ENCODE measurements at regions of chr12 and their contacts with region 1.

Region 1: DNA sequence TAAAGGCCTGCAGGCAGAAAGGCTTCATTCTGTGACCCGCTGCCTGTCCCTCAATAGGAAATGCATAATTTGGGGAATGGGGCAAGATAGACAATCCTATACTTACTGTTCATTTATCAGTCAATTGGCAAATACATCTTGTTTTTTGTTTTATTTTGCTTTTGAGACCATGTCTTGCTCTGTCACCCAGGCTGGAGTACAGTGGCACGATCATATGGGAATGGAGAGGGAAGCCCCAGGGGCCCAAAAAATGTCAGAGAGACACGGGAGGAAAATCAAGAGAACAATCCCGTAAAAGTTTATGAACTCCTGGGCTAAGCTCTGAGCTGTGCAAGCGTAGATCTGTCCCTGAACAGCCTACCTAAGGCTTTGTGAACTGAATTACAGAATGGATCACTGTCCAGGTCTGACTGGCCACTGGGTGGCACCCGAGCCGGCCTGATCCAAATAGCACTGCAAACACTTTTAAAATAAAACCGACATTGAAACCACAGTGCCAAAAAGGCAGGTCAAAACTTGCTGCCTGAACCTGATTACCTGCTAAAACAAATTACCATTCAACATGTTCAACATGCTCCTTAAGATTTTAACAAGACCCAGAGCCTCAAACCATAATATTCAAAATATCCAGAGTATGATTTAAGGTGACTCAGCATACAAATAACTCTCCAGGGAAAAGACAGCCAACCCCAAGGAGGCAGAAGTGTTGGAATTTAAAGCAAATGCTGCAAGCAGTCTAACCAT is 11.8 kb downstream of the COPS7A start:
- DNase-seq: peak; percentile 58 to 90 (median 85)
- ATAC-seq: peak; percentile 88 to 91
- H3K4me3 ChIP-seq: no peak overlapping the region
- H3K27ac ChIP-seq: no peak overlapping the region
- H3K4me1 ChIP-seq: no peaks in the 10 kb centered on the region
- H3K27me3 ChIP-seq: no peaks in the 10 kb centered on the region

Region 2: DNA sequence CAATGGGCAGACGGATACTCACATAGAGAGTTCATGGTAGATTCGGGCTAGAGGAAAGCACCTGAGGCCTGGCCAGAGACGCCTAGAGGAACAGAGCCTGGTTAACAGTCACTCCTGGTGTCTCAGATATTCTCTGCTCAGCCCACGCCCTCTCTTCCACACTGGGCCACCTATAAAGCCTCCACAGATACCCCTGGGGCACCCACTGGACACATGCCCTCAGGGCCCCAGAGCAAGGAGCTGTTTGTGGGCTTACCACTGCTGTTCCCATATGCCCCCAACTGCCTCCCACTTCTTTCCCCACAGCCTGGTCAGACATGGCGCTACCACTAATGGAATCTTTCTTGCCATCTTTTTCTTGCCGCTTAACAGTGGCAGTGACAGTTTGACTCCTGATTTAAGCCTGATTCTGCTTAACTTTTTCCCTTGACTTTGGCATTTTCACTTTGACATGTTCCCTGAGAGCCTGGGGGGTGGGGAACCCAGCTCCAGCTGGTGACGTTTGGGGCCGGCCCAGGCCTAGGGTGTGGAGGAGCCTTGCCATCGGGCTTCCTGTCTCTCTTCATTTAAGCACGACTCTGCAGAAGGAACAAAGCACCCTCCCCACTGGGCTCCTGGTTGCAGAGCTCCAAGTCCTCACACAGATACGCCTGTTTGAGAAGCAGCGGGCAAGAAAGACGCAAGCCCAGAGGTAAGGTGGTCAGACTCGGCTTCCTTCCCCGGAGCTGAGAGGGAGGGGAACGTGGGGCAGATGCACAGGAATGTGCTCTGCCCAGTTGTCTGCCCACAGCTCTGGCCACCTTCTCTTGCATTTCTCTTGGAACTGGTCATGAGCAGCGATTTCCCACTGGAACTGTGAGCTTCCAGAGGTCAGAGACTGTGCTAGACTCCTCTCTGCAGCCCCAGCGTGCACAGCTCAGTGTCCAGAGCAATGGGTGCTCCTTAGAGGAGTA is 53.6 kb after region 1 on chr12 and contains the start of gene CD4:
- intact Hi-C with region 1: loop called in 1 of 4 experiments (anchors 10 kb)
- DNase-seq: peak; percentile 76 to 91 (median 90)
- ATAC-seq: peak; percentile 72 to 77
- H3K4me3 ChIP-seq: no peak within 1 kb of the TSS
- H3K27ac ChIP-seq: peak within 1 kb of the TSS; percentile 25
- H3K4me1 ChIP-seq: peaks cover 2% of the 10 kb centered on the region
- H3K27me3 ChIP-seq: no peaks in the 10 kb centered on the region
- total RNA-seq, gene CD4: 11.4 to 15.4 (median 13.7) TPM

Region 3: GRCh38 chr12:6890789-6891645 is 155.4 kb after region 1 on chr12:
- intact Hi-C with region 1: no loop called
- DNase-seq: peak; percentile 98 to 100 (median 100)
- ATAC-seq: peak; percentile 97 to 98
- H3K4me3 ChIP-seq: peak overlapping the region; percentile 63
- H3K27ac ChIP-seq: peak overlapping the region; percentile 96
- H3K4me1 ChIP-seq: peaks cover 2% of the 10 kb centered on the region
- H3K27me3 ChIP-seq: no peaks in the 10 kb centered on the region

Region 4: DNA sequence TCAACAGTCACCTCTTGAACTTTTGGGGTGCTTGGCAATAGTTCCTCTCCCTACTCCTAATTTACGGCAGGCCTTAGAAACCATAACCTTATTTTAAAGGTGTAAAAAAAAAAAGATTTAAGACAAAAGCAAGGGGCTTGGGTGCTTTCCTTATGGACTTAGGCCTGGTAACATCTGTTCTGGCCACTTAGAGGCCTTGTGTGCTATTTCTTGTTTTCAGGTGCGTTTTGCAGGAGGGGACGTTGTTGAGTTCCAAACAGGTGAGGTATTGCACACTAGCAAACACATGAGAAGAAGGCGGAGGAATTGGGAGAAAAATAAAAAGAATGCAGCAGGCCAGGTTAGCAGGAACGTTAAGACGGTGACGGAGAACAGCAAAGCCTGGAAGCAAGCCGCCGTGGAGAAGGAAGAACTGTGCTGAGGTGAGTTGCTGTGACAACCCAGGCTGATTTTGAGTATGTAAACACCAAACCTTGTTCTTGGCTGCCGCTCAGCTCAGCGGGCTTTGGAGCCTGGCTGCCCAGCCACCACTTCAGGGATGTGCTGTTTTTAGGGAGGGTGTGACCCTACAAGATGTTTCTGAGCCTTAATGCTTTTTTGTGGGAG is 252.4 kb after region 1 on chr12:
- intact Hi-C with region 1: no loop called
- DNase-seq: no peak
- ATAC-seq: no peak
- H3K4me3 ChIP-seq: no peak overlapping the region
- H3K27ac ChIP-seq: no peak overlapping the region
- H3K4me1 ChIP-seq: no peaks in the 10 kb centered on the region
- H3K27me3 ChIP-seq: no peaks in the 10 kb centered on the region

Region 5: DNA sequence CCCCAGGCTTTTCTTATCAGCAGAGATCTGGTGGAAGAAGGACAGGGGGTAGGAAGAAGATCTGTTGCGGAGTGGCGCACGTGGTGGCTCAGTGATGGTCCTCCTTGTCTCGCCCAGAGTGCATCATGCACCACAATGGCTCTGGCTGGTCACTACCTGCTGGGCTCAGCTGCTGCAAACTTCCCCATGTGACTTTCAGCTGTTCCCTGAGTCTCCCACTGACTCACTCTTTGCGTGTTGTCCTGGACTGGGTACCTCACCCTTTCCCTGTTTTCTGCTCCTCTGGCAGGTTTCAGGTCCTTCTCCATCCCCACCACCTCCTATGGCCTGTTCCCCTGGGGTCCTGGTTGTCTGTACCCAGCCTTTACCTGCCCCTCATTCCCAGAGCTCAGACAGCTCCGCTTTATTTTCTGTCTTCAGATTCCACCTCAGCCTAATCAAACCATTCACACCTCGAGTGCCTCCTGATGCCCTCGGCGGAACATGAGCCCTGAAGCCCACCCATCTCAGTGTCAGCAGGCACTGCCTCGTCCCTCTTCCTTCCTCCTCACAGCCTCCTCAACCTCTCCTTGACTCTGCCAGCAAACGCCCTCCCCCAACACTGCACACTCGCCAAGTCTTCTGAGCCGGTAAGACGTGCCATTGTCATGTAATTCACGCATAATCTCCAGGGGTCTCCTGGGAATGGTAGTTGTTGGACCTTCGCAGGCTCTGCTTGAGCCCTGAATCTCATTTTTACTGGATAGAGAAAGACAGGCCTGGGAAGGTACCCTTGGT is 354.8 kb after region 1 on chr12:
- intact Hi-C with region 1: no loop called
- DNase-seq: no peak
- ATAC-seq: no peak
- H3K4me3 ChIP-seq: no peak overlapping the region
- H3K27ac ChIP-seq: no peak overlapping the region
- H3K4me1 ChIP-seq: no peaks in the 10 kb centered on the region
- H3K27me3 ChIP-seq: no peaks in the 10 kb centered on the region

Measured in right cardiac atrium (tissue), 5 donors.